Transverse colon (tissue), 4 donors: ENCODE measurements at regions of chr15 and their contacts with region 1.

Region 1: DNA sequence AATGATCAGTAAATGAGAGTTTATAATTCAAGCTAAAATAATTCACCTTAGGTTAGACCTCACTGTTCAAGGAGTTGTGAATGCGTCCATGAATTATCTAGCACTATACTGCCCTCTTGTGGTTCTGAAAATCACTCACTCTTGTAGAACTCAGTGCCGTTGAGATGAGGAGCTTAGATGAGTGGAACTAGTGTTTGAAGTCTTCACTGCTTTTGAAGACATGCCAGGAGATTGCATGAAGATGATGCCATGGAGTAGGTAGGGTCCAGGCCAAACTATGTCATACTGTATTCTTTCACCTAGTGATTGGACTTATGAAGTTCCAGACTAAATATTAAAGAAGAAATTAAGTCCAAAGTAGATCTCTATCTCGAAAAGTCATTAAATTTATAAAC is 28.8 kb downstream of the LYSMD4 start:
- DNase-seq: no peak
- H3K4me3 ChIP-seq: no peak overlapping the region
- H3K27ac ChIP-seq: peak overlapping the region; percentile 64 to 73 (median 70)
- H3K4me1 ChIP-seq: peaks cover 13 to 48% (median 27%) of the 10 kb centered on the region in 4 donors
- H3K27me3 ChIP-seq: no peaks in the 10 kb centered on the region
- CTCF ChIP-seq: peak; percentile 68 to 83 (median 77)
- EP300 ChIP-seq: no peak
- POLR2A ChIP-seq: no peak

Region 2: GRCh38 chr15:99009741-99010370 is 694.6 kb before region 1 on chr15:
- in situ Hi-C with region 1: no loop called
- intact Hi-C with region 1: no loop called
- DNase-seq: no peak
- H3K4me3 ChIP-seq: no peak overlapping the region
- H3K27ac ChIP-seq: no peak overlapping the region
- H3K4me1 ChIP-seq: peaks cover 0 to 5% (median 1%) of the 10 kb centered on the region in 4 donors
- H3K27me3 ChIP-seq: peaks cover under 1% of the 10 kb centered on the region
- CTCF ChIP-seq: no peak
- EP300 ChIP-seq: no peak
- POLR2A ChIP-seq: no peak

Region 3: GRCh38 chr15:99275525-99276128 is 428.8 kb before region 1 on chr15:
- in situ Hi-C with region 1: loop called (anchors 10 to 25 kb)
- intact Hi-C with region 1: no loop called
- DNase-seq: no peak
- H3K4me3 ChIP-seq: no peak overlapping the region
- H3K27ac ChIP-seq: no peak overlapping the region
- H3K4me1 ChIP-seq: no peaks in the 10 kb centered on the region
- H3K27me3 ChIP-seq: no peaks in the 10 kb centered on the region
- CTCF ChIP-seq: no peak
- EP300 ChIP-seq: no peak
- POLR2A ChIP-seq: no peak

Region 4: GRCh38 chr15:99282121-99282520 is 422.3 kb before region 1 on chr15:
- in situ Hi-C with region 1: loop called (anchors 10 to 25 kb)
- intact Hi-C with region 1: no loop called
- DNase-seq: no peak
- H3K4me3 ChIP-seq: no peak overlapping the region
- H3K27ac ChIP-seq: no peak overlapping the region
- H3K4me1 ChIP-seq: peaks cover 0 to 4% (median 0%) of the 10 kb centered on the region in 4 donors
- H3K27me3 ChIP-seq: no peaks in the 10 kb centered on the region
- CTCF ChIP-seq: no peak
- EP300 ChIP-seq: no peak
- POLR2A ChIP-seq: no peak

Region 5: GRCh38 chr15:99296386-99296785 is 408.1 kb before region 1 on chr15:
- in situ Hi-C with region 1: loop called in 2 of 4 experiments (anchors 25 kb)
- intact Hi-C with region 1: loop called (anchors 10 kb)
- DNase-seq: no peak
- H3K4me3 ChIP-seq: no peak overlapping the region
- H3K27ac ChIP-seq: peak overlapping the region in 2 of 4 donors; percentile 7 to 21
- H3K4me1 ChIP-seq: peaks cover 0 to 4% (median 0%) of the 10 kb centered on the region in 4 donors
- H3K27me3 ChIP-seq: no peaks in the 10 kb centered on the region
- CTCF ChIP-seq: no peak
- EP300 ChIP-seq: no peak
- POLR2A ChIP-seq: no peak

Region 6: DNA sequence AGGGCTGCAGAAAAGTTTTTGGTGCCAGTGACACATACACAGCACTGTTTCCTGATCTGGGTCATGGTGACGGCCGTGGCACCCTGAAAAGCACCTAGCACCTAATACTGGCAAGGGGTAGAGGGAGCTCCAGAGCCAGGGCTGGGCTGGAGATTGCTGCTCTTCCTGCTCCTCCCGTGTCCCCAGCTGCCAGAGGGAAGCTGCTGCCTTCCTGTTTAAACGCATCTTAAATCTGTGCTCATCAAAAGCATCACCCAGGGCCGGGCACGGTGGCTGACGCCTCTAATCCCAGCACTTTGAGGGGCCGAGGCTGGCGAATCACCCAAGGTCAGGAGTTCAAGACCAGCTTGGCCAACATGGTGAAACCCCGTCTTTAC is 295.4 kb before region 1 on chr15:
- in situ Hi-C with region 1: loop called in 1 of 4 experiments (anchors 25 kb)
- intact Hi-C with region 1: no loop called
- DNase-seq: peak; percentile 76
- H3K4me3 ChIP-seq: no peak overlapping the region
- H3K27ac ChIP-seq: peak overlapping the region in 3 of 4 donors; percentile 37 to 68 (median 40)
- H3K4me1 ChIP-seq: peaks cover 9 to 16% (median 14%) of the 10 kb centered on the region in 4 donors
- H3K27me3 ChIP-seq: no peaks in the 10 kb centered on the region
- CTCF ChIP-seq: peak; percentile 51 to 75 (median 55)
- EP300 ChIP-seq: no peak
- POLR2A ChIP-seq: no peak

Region 7: GRCh38 chr15:99565299-99566156 is 138.9 kb before region 1 on chr15 and contains the start of gene MEF2A:
- in situ Hi-C with region 1: loop called in 1 of 4 experiments (anchors 10 kb)
- intact Hi-C with region 1: no loop called
- DNase-seq: peak; percentile 95
- H3K4me3 ChIP-seq: peak within 1 kb of the TSS; percentile 66 to 91 (median 89)
- H3K27ac ChIP-seq: peak within 1 kb of the TSS; percentile 92 to 99 (median 98)
- H3K4me1 ChIP-seq: peaks cover 7 to 35% (median 22%) of the 10 kb centered on the region in 4 donors
- H3K27me3 ChIP-seq: no peaks in the 10 kb centered on the region
- CTCF ChIP-seq: peak in 1 of 5 experiments; percentile 30
- EP300 ChIP-seq: no peak
- POLR2A ChIP-seq: peak; percentile 91
- total RNA-seq, gene MEF2A: 37.4 to 62.5 (median 51.8) TPM